HCT116 (cell line): ENCODE measurements at regions of chr3 and their contacts with region 1.

Region 1: DNA sequence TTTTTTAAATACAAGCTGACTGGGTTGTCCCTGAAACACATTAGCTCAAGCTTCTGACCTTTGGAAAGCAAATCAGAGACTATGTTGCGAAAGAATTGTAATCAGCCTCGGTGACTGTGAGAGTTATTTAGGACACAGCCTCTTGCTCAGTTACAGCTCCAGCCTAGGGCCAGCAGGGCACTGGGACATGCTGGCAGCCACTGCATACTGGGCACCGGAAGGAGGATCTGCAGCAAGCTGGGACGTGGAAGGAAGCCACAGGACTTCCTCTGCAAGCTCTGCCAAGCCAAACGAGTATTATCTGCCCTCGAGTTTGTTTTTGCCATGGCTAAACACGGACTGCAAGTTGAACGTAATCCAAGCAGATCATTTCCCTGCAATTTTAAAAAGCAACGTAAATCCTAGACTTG is 24.4 kb upstream of the COPG1 start:
- DNase-seq: no peak
- ATAC-seq: peak; percentile 61
- H3K4me3 ChIP-seq: peak overlapping the region in 1 of 2 experiments; percentile 17; a peak in 1 of 4 replicates
- H3K27ac ChIP-seq: peak overlapping the region; percentile 44
- H3K4me1 ChIP-seq: peaks cover 29 to 52% of the 10 kb centered on the region in 2 experiments
- H3K27me3 ChIP-seq: no peaks in the 10 kb centered on the region
- CTCF ChIP-seq: no peak
- POLR2A ChIP-seq: no peak
- RAD21 ChIP-seq: no peak

Region 2: GRCh38 chr3:129211772-129212171 is 13.2 kb before region 1 on chr3:
- CTCF ChIA-PET with region 1: interaction called, 3 read pairs
- POLR2A ChIA-PET with region 1: interaction called, 12 read pairs
- RAD21 ChIA-PET with region 1: no interaction called
- intact Hi-C with region 1: no loop called
- DNase-seq: peak; percentile 98
- ATAC-seq: peak; percentile 98
- H3K4me3 ChIP-seq: peak overlapping the region; percentile 15 to 39; a peak in 2 of 4 replicates
- H3K27ac ChIP-seq: peak overlapping the region; percentile 76
- H3K4me1 ChIP-seq: peaks cover 21 to 29% of the 10 kb centered on the region in 2 experiments
- H3K27me3 ChIP-seq: no peaks in the 10 kb centered on the region
- CTCF ChIP-seq: no peak
- POLR2A ChIP-seq: peak; percentile 59
- RAD21 ChIP-seq: peak; percentile 47; the same call in 1 of the 2 replicates

Region 3: GRCh38 chr3:129413687-129414506 is 188.9 kb after region 1 on chr3:
- CTCF ChIA-PET with region 1: no interaction called
- POLR2A ChIA-PET with region 1: no interaction called
- RAD21 ChIA-PET with region 1: no interaction called
- intact Hi-C with region 1: no loop called
- DNase-seq: no peak
- ATAC-seq: no peak
- H3K4me3 ChIP-seq: no peak overlapping the region
- H3K27ac ChIP-seq: no peak overlapping the region
- H3K4me1 ChIP-seq: peaks cover 0 to 5% of the 10 kb centered on the region in 2 experiments; a peak in 1 of 4 replicates
- H3K27me3 ChIP-seq: peaks cover 3% of the 10 kb centered on the region; the same call in 1 of the 2 replicates
- CTCF ChIP-seq: no peak
- POLR2A ChIP-seq: no peak
- RAD21 ChIP-seq: no peak